ENCODE measurements at regions of chr4 and their contacts with region 1.

Region 1: GRCh38 chr4:22473268-22473667 is 42.6 kb downstream of the ADGRA3 start:
- DNase-seq: no peak
- ATAC-seq: no peak

Region 2: GRCh38 chr4:21780158-21780557 is 693.1 kb before region 1 on chr4:
- intact Hi-C with region 1: no loop called
- DNase-seq: no peak
- ATAC-seq: no peak

Region 3: DNA sequence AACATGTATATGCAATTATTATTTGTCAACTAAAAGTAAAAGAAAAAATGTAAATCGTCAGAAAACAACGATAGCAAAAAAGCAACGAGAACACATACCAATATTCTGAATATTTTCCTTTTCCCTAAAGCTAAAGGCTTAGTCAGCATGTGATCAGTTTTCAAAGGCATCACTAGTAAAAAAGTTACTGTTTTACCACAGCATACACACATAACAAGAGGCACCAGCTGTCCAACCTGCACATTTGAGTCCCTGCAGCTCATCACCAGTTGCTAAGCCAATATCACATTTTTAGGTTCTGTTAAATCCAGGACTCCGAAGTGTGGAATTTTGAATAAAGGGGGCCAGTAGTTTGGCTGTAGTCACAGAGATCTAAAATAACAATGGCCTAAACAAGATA is 161.2 kb before region 1 on chr4:
- intact Hi-C with region 1: no loop called
- DNase-seq: no peak
- ATAC-seq: no peak

Region 4: DNA sequence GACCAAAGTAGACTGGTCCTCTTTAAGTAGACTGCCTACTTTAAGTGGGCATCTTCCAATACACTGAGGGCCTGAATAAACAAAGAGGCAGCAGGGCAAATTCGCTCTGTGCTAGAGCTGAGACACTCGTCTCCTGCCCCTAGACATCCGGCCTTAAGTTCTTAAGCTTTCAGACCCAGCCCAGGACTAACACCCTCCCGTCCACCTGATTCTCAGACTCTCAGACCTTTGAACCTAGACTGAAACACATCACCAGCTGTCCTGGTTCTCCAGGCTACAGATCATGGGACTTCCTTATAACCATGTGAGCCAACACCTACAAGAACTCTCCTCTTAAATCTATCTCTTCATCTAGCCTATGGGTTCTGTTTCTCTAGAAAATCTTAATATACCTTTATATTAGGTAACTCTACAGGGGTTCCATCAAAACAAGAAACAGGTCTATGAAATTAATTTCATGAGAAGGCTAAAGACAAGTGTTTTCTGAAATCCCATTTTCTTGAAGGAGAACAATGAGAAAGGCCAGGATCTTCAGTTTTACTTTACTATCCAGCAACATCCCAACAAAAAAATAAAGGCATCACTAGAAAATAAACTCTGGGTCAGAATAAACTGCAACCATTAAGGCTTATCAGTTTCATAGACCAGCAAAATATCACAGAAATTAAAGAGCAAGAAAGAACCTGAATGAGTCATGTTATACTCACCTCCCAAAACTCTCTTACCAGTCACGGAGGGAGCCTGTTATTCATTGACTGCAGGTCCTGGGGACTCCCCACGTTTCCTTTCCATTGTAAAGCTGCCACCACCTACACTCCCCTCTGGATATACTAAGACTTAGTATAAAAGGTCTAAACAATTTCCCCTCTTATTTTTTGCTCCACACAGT is 27.8 kb after region 1 on chr4:
- intact Hi-C with region 1: loop called (anchors 1 kb)
- DNase-seq: no peak
- ATAC-seq: no peak

Region 5: GRCh38 chr4:22515145-22515887 is 42.0 kb after region 1 on chr4:
- intact Hi-C with region 1: loop called (anchors 5 kb)
- DNase-seq: peak; percentile 80
- ATAC-seq: peak; percentile 65